Left cardiac atrium (tissue), 4 donors: ENCODE measurements at regions of chr5 and their contacts with region 1.

Region 1: DNA sequence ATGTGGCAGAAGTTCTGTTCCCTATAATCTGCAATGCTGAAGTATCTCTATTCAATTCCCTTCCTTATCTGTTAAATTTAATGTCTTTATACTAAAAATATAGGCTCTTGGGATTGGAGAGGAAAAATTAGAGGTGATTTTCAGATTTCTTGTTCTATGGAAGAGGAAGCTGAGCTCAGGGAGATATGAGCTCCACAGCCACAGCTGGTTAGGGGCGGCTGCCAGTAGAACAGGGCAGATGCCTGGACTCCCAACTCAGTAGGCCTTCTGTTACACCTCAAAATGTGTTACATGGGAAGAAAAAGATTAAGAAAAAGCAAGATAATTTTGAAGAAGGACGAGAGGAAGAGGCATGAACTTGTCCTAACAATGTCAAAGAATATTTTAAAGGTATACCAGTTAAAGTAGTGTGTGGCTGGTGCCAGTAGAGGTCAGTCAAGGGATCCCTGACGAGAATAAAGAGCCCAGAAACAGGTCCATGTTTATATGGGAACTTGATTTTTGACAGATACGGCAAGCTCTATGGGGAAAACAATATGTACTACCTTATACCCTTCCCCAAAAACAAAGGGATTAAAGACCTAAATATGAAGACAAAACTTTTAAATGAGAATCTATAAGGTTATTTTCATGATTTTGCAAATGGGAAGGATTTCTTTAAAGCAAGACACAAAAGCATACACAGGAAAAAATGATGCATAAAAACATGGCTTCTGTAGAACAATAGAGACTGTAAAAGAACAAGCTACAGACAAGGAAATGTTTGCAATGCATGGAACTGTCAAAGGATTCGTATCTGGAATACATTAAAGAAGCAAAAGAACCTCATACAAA is 28.7 kb downstream of the DNAJC21 start:
- DNase-seq: no peak
- ATAC-seq: peak; percentile 54 to 67

Region 2: GRCh38 chr5:35009657-35010056 is 51.6 kb after region 1 on chr5:
- intact Hi-C with region 1: loop called in 1 of 2 experiments (anchors 5 kb)
- DNase-seq: no peak
- ATAC-seq: peak; percentile 68 to 70

Region 3: GRCh38 chr5:35046774-35047173 is 88.7 kb after region 1 on chr5:
- intact Hi-C with region 1: no loop called
- DNase-seq: no peak
- ATAC-seq: no peak

Region 4: GRCh38 chr5:35182541-35183535 is 224.8 kb after region 1 on chr5:
- intact Hi-C with region 1: loop called in 1 of 2 experiments (anchors 5 kb)
- DNase-seq: no peak
- ATAC-seq: peak; percentile 63 to 65

Region 5: DNA sequence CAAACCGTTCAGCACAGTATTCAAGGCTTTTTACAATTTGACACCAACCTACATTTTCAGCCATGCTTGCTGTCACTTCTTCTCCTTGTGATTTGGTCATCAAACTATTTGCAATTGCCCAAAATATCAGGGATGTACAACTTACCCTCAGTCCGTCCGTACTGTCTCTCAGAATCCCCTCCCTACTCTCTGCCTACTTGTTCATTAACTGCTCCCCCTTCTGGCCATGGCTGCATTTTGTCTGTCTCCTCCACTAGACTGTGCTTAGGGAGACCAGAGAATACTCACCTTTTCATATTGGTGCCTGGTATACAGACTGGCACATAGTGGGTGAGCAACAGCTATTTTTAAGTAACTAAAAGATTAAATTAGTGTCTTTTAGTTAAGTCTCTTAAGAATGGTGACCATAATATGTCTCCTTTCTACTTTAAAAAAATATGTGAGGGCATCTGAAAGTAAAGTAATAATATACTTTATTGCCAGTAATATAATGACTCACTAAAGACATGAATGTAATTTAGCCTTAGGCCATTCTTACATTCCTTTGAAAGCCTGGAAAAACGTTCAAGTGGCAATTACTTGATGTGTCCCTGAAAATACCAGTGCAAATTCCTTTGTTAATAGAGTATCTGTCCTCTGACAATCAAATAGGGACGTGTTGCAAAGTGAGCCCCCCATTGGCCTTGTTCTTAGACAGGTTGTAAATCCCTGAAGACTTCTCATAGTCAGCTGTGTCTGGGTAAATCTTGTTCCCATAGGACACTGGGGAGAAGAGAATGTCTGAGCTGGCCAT is 244.4 kb after region 1 on chr5:
- intact Hi-C with region 1: loop called in 1 of 2 experiments (anchors 5 kb)
- DNase-seq: peak; percentile 45
- ATAC-seq: peak in 1 of 2 donors; percentile 55